ENCODE measurements at regions of chr6 and their contacts with region 1.

Region 1: GRCh38 chr6:26103770-26104456 is 16.7 kb downstream of the HFE start:
- DNase-seq: peak; percentile 88
- H3K4me3 ChIP-seq: peak overlapping the region; percentile 66
- H3K27ac ChIP-seq: peak overlapping the region; percentile 88
- H3K27me3 ChIP-seq: no peaks in the 10 kb centered on the region
- CTCF ChIP-seq: peak; percentile 62

Region 2: DNA sequence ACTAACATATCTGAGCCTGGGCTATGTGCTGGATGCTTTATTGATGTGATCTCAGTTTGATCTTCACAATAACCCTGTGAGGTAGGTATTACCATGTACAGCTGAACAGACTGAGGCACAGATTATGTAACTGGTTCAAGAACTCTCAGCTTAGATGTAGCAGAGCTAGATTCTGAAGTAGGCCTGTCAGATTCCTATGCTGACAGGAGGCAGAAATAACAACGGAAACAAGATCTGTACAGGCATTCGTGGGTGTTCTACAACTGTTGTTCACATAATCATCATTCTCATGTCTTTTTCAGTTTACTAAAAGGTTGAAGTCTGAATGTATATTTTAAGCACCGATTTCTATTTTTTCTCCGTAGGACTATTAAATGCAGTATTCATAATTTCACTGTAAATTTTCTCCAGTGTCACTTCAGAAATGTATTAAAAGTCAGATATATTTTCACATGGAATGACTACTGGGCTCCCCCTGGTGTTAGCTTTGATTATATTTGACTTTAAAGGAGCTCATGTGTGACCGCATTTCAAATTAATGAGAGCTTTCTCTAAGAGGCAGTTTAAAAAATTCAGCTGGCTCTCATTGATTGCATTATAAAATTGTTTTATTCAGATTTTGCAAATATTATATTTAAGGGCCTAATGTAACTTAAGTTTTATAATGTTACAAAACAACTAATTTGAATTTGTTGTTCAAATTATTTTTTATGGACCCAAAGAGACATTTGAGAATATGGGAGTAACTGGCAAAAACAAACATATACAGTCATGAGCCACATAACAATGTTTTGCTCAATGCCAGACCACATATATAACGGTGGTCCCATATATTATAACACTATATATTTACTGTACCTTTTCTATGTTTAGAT is 385.8 kb before region 1 on chr6:
- CTCF ChIA-PET with region 1: no interaction called
- POLR2A ChIA-PET with region 1: no interaction called
- DNase-seq: no peak
- H3K4me3 ChIP-seq: no peak overlapping the region
- H3K27ac ChIP-seq: no peak overlapping the region
- H3K27me3 ChIP-seq: no peaks in the 10 kb centered on the region
- CTCF ChIP-seq: peak; percentile 65

Region 3: DNA sequence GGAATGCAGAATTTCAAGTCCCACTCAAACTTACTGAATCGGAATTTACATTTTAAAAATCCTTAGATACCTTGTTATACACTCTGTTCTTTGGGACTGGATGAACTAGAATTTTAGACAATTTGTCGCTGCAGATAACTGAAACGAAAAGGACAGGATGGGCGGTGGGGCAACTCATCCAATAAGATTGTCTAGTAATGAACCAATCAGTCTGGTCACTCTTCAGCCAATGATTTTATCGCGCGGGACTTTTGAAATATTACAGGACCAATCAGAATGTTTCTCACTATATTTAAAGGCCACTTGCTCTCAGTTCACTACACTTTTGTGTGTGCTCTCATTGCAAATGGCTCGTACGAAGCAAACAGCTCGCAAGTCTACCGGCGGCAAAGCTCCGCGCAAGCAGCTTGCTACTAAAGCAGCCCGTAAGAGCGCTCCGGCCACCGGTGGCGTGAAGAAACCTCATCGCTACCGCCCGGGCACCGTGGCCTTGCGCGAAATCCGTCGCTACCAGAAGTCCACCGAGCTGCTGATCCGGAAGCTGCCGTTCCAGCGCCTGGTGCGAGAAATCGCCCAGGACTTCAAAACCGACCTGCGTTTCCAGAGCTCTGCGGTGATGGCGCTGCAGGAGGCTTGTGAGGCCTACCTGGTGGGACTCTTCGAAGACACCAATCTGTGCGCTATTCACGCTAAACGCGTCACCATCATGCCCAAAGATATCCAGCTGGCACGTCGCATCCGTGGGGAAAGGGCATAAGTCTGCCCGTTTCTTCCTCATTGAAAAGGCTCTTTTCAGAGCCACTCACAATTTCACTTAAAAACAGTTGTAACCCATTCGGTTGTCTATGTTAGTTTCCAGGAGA is 58.6 kb before region 1 on chr6:
- CTCF ChIA-PET with region 1: no interaction called
- POLR2A ChIA-PET with region 1: interaction called, 21 read pairs
- DNase-seq: peak; percentile 82
- H3K4me3 ChIP-seq: peak overlapping the region; percentile 66
- H3K27ac ChIP-seq: peak overlapping the region; percentile 63
- H3K27me3 ChIP-seq: no peaks in the 10 kb centered on the region
- CTCF ChIP-seq: peak; percentile 19; the same call in 1 of the 2 replicates

Region 4: DNA sequence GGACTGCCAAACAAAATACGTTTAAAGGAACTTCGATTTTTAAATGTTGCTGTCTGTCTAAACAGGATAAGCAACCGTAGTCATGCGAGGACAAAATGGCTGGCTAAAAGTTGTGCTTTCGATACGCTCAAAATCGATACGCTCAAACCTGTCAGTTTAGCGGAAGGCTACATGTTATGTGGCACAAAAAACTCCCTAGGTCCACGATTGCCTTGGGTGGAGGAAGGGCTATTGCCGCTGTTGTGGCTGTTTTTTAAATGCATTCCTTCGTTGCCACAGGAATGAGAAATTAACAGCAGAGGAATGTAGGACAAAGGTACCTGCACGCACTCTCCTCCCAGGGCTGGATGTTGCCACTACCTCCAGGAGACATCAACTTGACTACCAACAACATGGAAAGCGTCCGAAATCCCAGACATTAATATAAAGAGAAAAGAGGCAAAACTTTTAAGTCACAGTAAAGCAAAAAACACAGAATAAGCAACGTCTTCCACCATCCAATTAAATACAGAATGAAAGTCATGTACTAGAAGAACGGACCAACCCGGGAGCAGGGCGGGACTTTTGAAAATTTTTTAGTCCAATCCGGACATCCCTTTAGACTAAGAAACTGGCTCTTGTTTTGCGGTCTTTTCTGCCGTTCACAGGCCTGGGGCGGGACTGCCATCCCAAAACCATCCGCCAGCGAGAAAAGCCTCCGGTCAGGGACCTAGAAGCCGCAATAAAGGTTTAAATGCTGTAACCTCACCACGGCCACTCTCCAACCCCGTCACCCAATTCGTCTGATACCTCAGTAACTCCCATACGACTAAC is 48.9 kb before region 1 on chr6:
- CTCF ChIA-PET with region 1: interaction called, 858 read pairs
- POLR2A ChIA-PET with region 1: interaction called, 10 read pairs
- DNase-seq: peak; percentile 89
- H3K4me3 ChIP-seq: peak overlapping the region; percentile 77
- H3K27ac ChIP-seq: peak overlapping the region; percentile 90
- H3K27me3 ChIP-seq: no peaks in the 10 kb centered on the region
- CTCF ChIP-seq: no peak